ENCODE measurements at regions of chr2 and their contacts with region 1.

Region 1: DNA sequence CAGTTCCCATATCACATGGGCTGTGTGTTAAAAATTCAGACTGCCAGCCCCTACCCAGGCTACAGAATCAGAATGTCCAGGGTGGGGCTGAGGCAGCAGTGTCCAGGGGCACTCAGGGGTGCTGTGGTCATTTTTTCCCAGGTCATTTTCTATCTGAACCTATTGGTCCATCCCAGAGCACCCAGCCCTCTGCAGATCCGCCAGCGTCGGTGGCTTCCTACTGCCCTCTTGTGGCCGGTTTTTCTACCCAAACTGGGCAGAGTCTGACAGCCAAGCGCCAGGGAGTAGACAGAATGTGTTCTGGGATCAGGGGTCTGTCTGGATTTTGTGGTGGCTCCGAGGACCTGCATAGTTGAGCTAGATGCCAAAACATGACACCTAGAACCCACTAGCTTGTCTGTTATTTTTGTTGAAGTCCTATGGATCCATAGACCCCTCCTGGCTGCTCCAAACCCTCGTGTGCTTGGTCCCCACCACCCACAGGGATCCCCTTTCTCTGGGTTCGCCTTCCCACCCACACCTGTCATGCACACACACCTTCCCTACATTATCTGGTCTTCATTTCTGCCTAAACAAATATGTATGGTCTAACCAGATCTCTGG is 34.1 kb upstream of the RMDN2 start:
- DNase-seq: peak; percentile 53 to 79
- ATAC-seq: peak; percentile 82 to 86 (median 85)
- H3K4me3 ChIP-seq: no peak overlapping the region
- H3K4me3 Mint-ChIP-seq: no peak overlapping the region
- H3K27ac ChIP-seq: no peak overlapping the region
- H3K27ac Mint-ChIP-seq: peak overlapping the region in 1 of 2 donors; percentile 79
- H3K4me1 ChIP-seq: peaks cover 26% of the 10 kb centered on the region
- H3K4me1 Mint-ChIP-seq: peaks cover 33 to 35% of the 10 kb centered on the region in 2 donors
- H3K27me3 ChIP-seq: peaks cover 2% of the 10 kb centered on the region
- H3K27me3 Mint-ChIP-seq: peaks cover 5 to 9% of the 10 kb centered on the region in 2 donors
- CTCF ChIP-seq: peak; percentile 80

Region 2: GRCh38 chr2:37973615-37974353 is 82.8 kb after region 1 on chr2:
- intact Hi-C with region 1: no loop called
- DNase-seq: no peak
- ATAC-seq: no peak
- H3K4me3 ChIP-seq: no peak overlapping the region
- H3K4me3 Mint-ChIP-seq: no peak overlapping the region
- H3K27ac ChIP-seq: no peak overlapping the region
- H3K27ac Mint-ChIP-seq: no peak overlapping the region
- H3K4me1 ChIP-seq: no peaks in the 10 kb centered on the region
- H3K4me1 Mint-ChIP-seq: peaks cover 13 to 20% of the 10 kb centered on the region in 2 donors
- H3K27me3 ChIP-seq: no peaks in the 10 kb centered on the region
- H3K27me3 Mint-ChIP-seq: no peaks in the 10 kb centered on the region
- CTCF ChIP-seq: no peak

Region 3: DNA sequence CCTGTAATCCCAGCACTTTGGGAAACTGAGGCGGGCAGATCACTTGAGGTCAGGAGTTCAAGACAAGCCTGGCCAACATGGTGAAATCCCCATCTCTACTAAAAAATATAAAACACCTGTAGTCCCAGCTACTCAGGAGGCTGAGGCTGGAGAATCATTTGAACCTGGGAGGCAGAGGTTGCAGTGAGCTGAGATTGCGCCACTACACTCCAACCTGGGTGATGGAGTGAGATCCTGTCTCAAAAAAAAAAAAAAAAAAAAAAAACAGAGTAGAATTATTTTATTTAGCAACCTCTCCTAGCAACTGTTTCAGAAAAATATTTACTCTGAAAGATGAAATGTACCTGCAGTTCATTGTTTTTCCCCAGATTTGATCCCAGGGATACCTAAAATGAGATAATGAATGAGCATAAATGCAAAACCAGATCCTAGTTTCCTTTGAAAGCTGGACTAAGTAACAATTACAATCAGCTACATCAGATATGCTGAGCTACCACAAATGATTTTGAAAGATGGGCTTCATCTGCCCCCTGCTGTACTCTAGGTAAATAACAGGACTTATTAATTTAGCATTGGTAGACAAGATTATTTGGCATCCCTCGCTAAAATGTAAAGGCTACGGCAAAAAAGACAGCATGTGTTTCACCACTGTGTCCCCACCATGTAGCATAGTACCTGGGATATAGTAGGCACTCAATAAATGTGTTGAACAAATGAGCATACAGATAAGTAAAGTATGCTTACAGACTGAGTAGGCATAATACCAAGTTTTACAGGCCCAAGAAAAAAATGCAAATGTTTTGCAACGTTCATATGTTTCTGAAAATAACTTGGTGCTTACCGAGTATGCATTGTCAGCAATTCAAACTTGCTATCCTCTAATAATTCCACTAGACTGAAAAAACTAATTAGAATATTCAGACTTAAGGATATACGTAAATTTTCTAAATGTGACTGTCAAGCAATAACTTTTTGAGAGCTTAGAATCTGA is 383.6 kb after region 1 on chr2:
- intact Hi-C with region 1: loop called (anchors 5 kb)
- DNase-seq: peak in 1 of 2 donors; percentile 65
- ATAC-seq: peak; percentile 79 to 81 (median 80)
- H3K4me3 ChIP-seq: no peak overlapping the region
- H3K4me3 Mint-ChIP-seq: no peak overlapping the region
- H3K27ac ChIP-seq: no peak overlapping the region
- H3K27ac Mint-ChIP-seq: no peak overlapping the region
- H3K4me1 ChIP-seq: no peaks in the 10 kb centered on the region
- H3K4me1 Mint-ChIP-seq: peaks cover 0 to 6% of the 10 kb centered on the region in 2 donors
- H3K27me3 ChIP-seq: no peaks in the 10 kb centered on the region
- H3K27me3 Mint-ChIP-seq: no peaks in the 10 kb centered on the region
- CTCF ChIP-seq: peak; percentile 68

Measured in natural killer cell (primary cell).